ENCODE measurements at regions of chr16 and their contacts with region 1.

Region 1: DNA sequence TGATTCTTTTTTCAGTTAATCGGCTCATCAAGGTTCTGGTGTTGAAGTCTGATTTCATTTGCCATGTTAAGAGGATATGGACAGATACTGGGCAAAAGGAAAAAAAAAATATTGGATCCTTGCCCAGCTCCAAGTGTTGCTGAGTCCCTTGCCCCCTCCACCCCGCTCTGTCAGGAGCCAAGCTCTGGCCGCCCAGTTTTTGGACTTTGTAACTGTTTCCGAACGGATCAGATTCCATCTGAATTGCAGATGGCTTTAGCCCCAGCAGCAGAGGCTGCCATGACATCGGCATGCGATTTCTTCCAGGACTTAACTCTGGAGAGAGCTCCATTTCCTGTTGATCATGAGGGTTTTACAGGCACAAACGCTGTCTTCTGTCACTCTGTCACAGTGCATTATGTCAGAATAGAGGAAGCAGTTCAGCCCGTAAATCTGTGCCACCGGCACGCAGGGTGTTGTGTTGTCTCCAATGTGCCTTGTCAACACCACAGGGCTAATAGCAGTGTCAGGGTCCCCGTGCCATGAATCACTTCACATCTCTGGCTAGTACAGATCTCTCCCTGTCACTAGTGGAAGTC is 615.6 kb downstream of the MAF start:
- DNase-seq: peak; percentile 19
- H3K4me3 Mint-ChIP-seq: peak overlapping the region; percentile 68
- H3K27ac Mint-ChIP-seq: peak overlapping the region; percentile 82
- H3K4me1 Mint-ChIP-seq: peaks cover 51% of the 10 kb centered on the region
- H3K27me3 Mint-ChIP-seq: no peaks in the 10 kb centered on the region
- CTCF ChIP-seq: no peak

Region 2: DNA sequence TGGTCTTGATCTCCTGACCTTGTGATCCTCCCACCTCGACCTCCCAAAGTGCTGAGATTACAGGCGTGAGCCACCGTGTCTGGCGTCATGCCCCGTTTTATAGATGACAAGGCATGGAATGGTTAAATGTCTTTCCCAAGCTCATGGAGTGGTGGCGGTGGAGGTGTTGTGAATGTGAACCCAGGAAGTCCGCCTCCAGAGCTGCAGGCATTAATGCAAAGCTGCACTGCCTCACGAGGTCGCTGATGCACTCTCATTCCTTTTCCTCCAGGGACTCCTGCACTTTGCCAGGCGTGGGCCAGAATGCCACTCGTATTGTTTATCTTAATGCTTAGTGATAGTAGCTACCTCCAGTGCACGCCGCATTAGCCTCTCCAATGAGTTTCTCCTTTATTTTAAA is 735.9 kb before region 1 on chr16:
- CTCF ChIA-PET with region 1: no interaction called
- intact Hi-C with region 1: loop called (anchors 10 kb)
- DNase-seq: peak; percentile 48
- H3K4me3 Mint-ChIP-seq: no peak overlapping the region
- H3K27ac Mint-ChIP-seq: no peak overlapping the region
- H3K4me1 Mint-ChIP-seq: peaks cover 21% of the 10 kb centered on the region
- H3K27me3 Mint-ChIP-seq: no peaks in the 10 kb centered on the region
- CTCF ChIP-seq: peak; percentile 15

Region 3: GRCh38 chr16:78659216-78659942 is 325.6 kb before region 1 on chr16:
- CTCF ChIA-PET with region 1: no interaction called
- intact Hi-C with region 1: loop called (anchors 10 kb)
- DNase-seq: no peak
- H3K4me3 Mint-ChIP-seq: no peak overlapping the region
- H3K27ac Mint-ChIP-seq: no peak overlapping the region
- H3K4me1 Mint-ChIP-seq: no peaks in the 10 kb centered on the region
- H3K27me3 Mint-ChIP-seq: no peaks in the 10 kb centered on the region
- CTCF ChIP-seq: no peak

Region 4: DNA sequence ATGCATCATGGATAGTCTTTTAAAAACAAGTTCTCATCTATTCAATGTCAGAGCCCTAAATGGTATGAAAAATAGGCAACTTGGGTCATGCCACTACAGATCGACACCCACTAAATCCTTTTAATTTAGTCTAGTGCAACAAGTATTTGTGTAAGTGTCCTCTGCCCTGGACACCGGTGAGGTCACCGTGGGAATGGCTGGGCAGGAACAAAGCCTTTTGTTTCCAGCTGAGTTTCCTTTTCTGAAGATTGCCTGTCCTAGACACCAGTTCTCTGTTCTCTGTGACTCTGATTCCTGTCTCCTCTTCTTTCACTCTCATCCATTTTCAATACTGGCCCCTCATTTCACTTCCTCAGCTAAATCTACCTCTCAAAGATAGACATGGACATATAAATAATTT is 169.1 kb after region 1 on chr16:
- CTCF ChIA-PET with region 1: no interaction called
- intact Hi-C with region 1: loop called (anchors 5 kb)
- DNase-seq: peak; percentile 49
- H3K4me3 Mint-ChIP-seq: no peak overlapping the region
- H3K27ac Mint-ChIP-seq: peak overlapping the region; percentile 45
- H3K4me1 Mint-ChIP-seq: peaks cover 64% of the 10 kb centered on the region
- H3K27me3 Mint-ChIP-seq: no peaks in the 10 kb centered on the region
- CTCF ChIP-seq: no peak

Region 5: DNA sequence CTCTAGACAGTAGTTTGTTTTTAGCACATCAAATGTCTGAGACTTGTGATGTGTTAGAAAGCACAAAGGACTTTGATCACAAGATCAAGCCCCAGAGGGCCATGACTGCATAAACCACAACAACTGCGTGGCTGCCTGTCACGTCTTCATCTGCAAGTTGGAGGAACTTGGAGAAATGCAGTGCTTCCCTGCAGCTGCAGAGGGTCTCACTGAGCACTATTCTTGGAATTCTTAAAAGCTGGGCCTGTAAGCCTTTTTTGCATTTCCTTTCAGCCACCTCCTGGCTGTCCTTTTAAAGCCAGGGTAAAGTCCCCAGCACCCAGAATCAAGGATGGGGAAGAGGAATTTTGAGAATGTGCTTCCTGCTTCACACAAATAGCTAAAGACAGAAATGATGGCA is 184.3 kb after region 1 on chr16:
- CTCF ChIA-PET with region 1: no interaction called
- intact Hi-C with region 1: loop called (anchors 5 kb)
- DNase-seq: no peak
- H3K4me3 Mint-ChIP-seq: no peak overlapping the region
- H3K27ac Mint-ChIP-seq: no peak overlapping the region
- H3K4me1 Mint-ChIP-seq: peaks cover 18% of the 10 kb centered on the region
- H3K27me3 Mint-ChIP-seq: no peaks in the 10 kb centered on the region
- CTCF ChIP-seq: no peak

Measured in Calu3 (cell line).